SK-N-SH (cell line): ENCODE measurements at regions of chr11 and their contacts with region 1.

Region 1: DNA sequence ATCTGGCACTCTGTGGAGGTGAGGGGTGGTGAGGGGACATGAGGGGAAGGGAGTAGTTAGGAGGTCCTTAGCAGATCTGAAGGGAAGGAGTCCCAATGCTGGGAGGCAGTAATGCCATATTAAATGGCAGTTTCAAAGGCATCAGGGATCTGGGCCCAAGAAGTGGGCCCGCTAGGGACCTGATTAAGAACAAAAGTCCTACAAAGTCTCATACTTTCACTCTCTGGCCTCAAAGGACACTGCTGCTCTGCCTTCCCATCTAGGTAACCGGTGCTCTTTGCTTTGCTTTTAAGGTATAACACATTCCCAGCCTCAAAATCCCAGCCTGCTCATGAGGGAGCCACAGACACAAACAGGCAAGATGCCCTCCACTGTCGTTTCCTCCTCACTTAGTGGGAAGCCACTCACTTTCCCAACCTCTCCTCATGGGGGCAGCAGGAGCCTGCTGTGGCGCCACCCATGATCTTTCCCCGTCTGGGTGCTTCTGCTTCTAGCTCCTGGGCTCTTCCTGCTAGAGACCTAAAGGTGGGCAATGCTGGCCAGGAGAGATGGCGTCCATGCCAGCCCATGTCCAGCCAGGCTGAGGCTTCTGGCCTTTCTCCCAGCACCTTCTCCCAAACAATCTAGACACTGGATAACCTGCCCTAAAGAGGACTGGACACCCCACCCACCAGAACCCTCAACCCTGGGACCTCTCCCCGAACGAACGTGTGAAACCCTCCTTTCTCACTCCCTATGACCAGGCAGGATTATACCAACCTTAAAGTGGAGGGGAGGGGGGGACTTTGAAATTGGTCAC is 68.3 kb downstream of the PLEKHA7 start:
- DNase-seq: peak; percentile 77
- H3K4me3 ChIP-seq: no peak overlapping the region
- H3K27ac ChIP-seq: no peak overlapping the region
- H3K4me1 ChIP-seq: no peaks in the 10 kb centered on the region
- H3K27me3 ChIP-seq: peaks cover 6% of the 10 kb centered on the region; the same call in 1 of the 2 replicates
- CTCF ChIP-seq: peak; percentile 52
- EP300 ChIP-seq: no peak
- RAD21 ChIP-seq: peak; percentile 97

Region 2: DNA sequence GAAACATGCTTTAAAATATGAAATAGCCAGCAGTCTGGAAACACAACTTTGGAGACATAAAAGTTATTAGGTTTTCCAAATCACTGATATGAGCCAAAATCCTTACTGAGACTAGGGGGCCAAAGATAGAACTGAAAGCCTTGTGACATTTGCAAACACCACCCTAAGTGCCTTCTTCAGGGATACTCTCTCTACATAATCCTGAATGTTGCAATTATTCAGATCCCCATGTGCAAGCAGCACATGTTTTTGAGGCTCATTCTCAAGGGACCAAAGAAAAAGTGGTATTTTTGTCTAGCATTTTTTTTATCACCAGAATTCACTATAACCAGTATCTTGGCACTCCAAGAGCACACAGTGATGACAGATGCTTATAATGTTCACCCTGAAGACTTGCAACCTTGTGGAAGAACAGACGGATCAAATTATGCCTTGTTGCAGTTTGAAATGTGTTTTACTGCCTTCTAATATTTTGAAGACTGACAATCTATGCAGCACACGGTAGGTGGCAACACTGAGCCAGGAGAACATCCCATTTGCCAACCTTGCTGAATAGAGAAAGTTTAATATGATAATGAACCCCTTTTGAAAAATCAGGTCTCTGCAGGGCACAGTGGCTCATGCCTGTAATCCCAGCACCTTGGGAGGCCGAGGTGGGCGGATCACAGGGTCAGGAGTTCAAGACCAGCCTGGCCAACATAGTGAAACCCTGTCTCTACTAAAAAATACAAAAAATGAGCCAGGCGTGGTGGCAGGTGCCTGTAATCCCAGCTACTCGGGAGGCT is 10.2 kb before region 1 on chr11:
- CTCF ChIA-PET with region 1: interaction called, 13 read pairs
- POLR2A ChIA-PET with region 1: no interaction called
- DNase-seq: peak; percentile 50
- H3K4me3 ChIP-seq: no peak overlapping the region
- H3K27ac ChIP-seq: no peak overlapping the region
- H3K4me1 ChIP-seq: peaks cover 0 to 3% of the 10 kb centered on the region in 2 experiments; a peak in 1 of 4 replicates
- H3K27me3 ChIP-seq: peaks cover 10% of the 10 kb centered on the region; the same call in 1 of the 2 replicates
- CTCF ChIP-seq: peak; percentile 76
- EP300 ChIP-seq: no peak
- RAD21 ChIP-seq: peak; percentile 68

Region 3: GRCh38 chr11:16966930-16967671 is 21.2 kb after region 1 on chr11:
- CTCF ChIA-PET with region 1: interaction called, 36 read pairs
- POLR2A ChIA-PET with region 1: no interaction called
- DNase-seq: no peak
- H3K4me3 ChIP-seq: no peak overlapping the region
- H3K27ac ChIP-seq: no peak overlapping the region
- H3K4me1 ChIP-seq: peaks cover 0 to 20% of the 10 kb centered on the region in 2 experiments; a peak in 2 of 4 replicates
- H3K27me3 ChIP-seq: no peaks in the 10 kb centered on the region
- CTCF ChIP-seq: no peak
- EP300 ChIP-seq: no peak
- RAD21 ChIP-seq: no peak

Region 4: GRCh38 chr11:17014838-17015626 is 69.2 kb after region 1 on chr11:
- CTCF ChIA-PET with region 1: interaction called, 18 read pairs
- POLR2A ChIA-PET with region 1: no interaction called
- DNase-seq: peak; percentile 82
- H3K4me3 ChIP-seq: peak overlapping the region; percentile 43 to 55
- H3K27ac ChIP-seq: no peak overlapping the region
- H3K4me1 ChIP-seq: peaks cover 0 to 3% of the 10 kb centered on the region in 2 experiments; a peak in 1 of 4 replicates
- H3K27me3 ChIP-seq: peaks cover 49% of the 10 kb centered on the region
- CTCF ChIP-seq: peak; percentile 44
- EP300 ChIP-seq: no peak
- RAD21 ChIP-seq: no peak

Region 5: DNA sequence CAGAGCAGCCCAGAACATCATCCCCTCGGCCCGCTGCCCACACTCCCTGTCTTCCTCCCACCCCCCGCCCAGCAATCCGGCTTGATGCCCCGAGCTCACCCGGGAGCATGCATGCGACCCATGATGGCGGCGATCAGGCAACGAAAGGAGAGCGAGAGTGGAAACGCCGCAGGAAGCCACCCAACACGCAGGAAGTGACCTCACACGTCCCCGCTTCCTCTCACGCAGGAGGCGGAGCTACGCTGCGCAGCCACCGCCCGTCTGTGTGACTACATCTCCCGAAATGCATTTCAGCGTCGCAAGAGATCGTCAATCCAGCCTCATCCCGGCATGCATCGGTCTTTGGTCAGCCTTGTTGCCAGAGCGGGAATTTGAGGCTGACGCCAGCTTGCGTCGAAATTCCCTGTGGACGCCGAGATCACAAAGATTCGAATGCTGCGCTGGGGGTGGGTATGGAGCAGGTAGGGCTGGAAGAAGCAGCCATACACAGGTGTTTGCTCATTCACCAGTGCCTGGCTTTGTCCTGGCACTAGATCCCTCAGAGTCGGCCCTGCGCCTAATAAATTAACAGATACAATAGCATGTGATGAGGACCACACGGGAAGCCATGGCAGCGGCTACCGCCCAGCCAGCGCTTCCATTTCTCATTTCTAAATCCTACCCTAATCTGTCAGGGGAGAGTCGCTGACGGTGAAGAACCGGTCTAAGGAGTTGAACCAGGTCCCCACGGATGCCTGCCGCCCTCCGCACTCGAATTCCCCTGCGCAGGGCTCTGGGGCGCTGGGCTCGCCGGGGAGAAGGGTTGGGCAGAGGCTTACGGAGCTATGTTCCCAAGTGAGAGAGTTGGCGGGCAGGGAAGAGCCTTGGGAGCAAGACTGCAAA is 131.9 kb after region 1 on chr11 and contains the start of gene RPS13:
- CTCF ChIA-PET with region 1: interaction called, 14 read pairs
- POLR2A ChIA-PET with region 1: interaction called, 3 read pairs
- DNase-seq: peak; percentile 92
- H3K4me3 ChIP-seq: peak within 1 kb of the TSS; percentile 98
- H3K27ac ChIP-seq: peak within 1 kb of the TSS; percentile 79 to 87
- H3K4me1 ChIP-seq: peaks cover 7 to 18% of the 10 kb centered on the region in 2 experiments; a peak in 2 of 4 replicates
- H3K27me3 ChIP-seq: no peaks in the 10 kb centered on the region
- CTCF ChIP-seq: no peak
- EP300 ChIP-seq: peak in 1 of 2 experiments; percentile 31; a peak in 1 of 4 replicates
- RAD21 ChIP-seq: no peak
- polyA plus RNA-seq, gene RPS13: 950 and 997 TPM in 2 replicates